ENCODE measurements at regions of chr1 and their contacts with region 1.

Region 1: DNA sequence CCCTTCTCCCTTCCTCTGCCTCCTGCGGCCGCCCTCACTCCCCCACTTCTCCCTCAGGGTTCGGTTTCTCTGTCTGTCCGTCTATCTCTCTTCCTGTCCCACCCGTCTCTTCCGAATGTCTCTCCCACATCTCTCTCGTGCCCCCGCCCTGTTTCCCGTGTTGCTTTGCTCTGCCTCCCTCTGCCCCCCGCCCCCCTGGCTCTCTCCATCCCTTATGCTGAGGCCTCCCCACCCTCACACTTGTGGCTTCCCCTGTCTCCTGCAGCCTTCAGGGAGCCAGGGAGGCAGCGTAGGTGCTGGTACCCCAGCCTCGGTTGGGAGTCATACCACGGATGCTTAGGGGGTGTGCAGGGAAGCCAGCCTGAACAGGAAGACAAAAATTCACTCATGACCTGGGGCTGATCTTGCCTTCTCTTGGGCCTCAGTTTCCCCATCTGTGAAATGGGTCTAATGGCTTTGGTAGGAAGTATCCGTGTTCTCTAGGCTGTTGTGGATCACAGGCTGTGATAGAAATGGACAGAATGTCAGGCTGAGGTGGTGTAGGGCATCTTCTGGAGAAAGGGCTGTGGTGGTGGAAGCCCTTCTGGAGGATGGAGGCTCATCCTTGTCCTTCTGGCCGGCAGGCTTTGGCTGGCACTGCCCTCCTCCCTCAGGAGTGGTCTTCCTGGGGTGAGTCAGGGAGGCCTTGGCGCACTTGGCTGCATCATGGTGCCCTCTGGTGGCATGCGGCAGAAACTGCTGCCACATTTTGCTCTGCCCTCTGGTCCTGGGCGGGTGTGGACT is 55.5 kb downstream of the FOXO6 start:
- DNase-seq: peak; percentile 71
- H3K4me3 ChIP-seq: no peak overlapping the region
- H3K27ac ChIP-seq: no peak overlapping the region
- H3K4me1 ChIP-seq: peaks cover 9% of the 10 kb centered on the region
- H3K27me3 ChIP-seq: no peaks in the 10 kb centered on the region
- CTCF ChIP-seq: peak; percentile 82 to 96
- POLR2A ChIP-seq: no peak

Region 2: DNA sequence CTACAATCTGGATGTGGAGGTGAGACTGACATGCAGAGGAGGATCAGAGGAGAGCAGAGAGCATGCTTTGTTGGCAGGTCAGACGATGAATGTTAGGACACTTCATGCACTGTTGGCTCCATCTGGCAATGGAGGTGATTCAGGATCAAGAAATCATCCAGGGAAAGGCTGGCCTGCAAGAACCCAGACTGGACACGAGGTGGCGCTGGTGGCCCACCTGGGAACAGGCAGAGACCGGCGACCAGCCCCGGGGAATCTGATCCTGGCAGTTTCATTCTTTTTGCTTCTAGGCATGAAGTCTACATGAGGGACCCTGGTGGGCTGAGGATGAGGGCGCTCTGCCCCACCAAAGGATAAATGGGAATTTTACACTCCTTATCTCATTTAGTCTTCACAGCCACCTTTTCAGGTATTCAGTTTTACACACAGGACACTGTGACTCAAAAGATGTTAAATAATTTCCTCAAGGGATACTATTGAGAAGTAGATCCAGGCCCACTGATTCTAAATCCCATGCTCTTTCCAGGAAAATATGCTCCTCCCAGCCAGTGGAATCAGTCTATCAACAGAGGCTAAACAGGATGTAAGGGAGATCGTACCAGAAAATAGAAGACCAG is 148.5 kb before region 1 on chr1:
- CTCF ChIA-PET with region 1: interaction called, 11 read pairs
- POLR2A ChIA-PET with region 1: no interaction called
- dilution Hi-C with region 1: no loop called
- intact Hi-C with region 1: loop called (anchors 1 kb)
- DNase-seq: peak; percentile 68
- H3K4me3 ChIP-seq: no peak overlapping the region
- H3K27ac ChIP-seq: no peak overlapping the region
- H3K4me1 ChIP-seq: no peaks in the 10 kb centered on the region
- H3K27me3 ChIP-seq: peaks cover 0 to 9% of the 10 kb centered on the region in 2 experiments
- CTCF ChIP-seq: peak; percentile 95 to 97
- POLR2A ChIP-seq: no peak

Region 3: DNA sequence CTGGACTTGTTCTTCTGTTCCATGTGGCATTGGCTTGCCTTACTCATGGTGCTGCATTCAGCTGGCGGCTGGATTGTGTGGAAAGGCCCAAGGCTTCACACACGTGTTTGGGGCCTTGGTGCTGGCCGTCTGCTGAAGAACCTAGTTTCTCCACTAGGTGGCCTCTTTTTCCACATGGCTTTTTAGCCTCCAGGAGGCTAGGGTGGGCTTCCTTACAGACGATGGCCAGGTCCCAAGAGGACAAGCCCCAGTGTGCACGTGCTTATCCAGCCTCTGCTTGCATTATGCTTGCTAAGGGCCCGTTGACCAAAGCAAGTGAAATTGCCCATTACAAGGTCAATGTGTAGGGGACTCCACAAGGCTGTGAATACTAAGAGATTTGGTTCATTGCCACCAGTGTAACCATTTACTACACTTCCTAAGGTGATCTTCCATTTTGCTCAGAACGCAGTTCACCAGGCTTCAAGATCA is 103.0 kb before region 1 on chr1:
- CTCF ChIA-PET with region 1: interaction called, 9 read pairs
- POLR2A ChIA-PET with region 1: no interaction called
- dilution Hi-C with region 1: no loop called
- intact Hi-C with region 1: loop called (anchors 1 kb)
- DNase-seq: peak; percentile 30
- H3K4me3 ChIP-seq: no peak overlapping the region
- H3K27ac ChIP-seq: no peak overlapping the region
- H3K4me1 ChIP-seq: no peaks in the 10 kb centered on the region
- H3K27me3 ChIP-seq: peaks cover 0 to 14% of the 10 kb centered on the region in 2 experiments
- CTCF ChIP-seq: peak; percentile 61 to 72
- POLR2A ChIP-seq: no peak

Region 4: GRCh38 chr1:41322835-41323627 is 93.7 kb before region 1 on chr1:
- CTCF ChIA-PET with region 1: interaction called, 54 read pairs
- POLR2A ChIA-PET with region 1: no interaction called
- dilution Hi-C with region 1: no loop called
- intact Hi-C with region 1: loop called (anchors 1 kb)
- DNase-seq: peak; percentile 24
- H3K4me3 ChIP-seq: no peak overlapping the region
- H3K27ac ChIP-seq: no peak overlapping the region
- H3K4me1 ChIP-seq: no peaks in the 10 kb centered on the region
- H3K27me3 ChIP-seq: no peaks in the 10 kb centered on the region
- CTCF ChIP-seq: peak; percentile 53 to 62
- POLR2A ChIP-seq: no peak

Region 5: DNA sequence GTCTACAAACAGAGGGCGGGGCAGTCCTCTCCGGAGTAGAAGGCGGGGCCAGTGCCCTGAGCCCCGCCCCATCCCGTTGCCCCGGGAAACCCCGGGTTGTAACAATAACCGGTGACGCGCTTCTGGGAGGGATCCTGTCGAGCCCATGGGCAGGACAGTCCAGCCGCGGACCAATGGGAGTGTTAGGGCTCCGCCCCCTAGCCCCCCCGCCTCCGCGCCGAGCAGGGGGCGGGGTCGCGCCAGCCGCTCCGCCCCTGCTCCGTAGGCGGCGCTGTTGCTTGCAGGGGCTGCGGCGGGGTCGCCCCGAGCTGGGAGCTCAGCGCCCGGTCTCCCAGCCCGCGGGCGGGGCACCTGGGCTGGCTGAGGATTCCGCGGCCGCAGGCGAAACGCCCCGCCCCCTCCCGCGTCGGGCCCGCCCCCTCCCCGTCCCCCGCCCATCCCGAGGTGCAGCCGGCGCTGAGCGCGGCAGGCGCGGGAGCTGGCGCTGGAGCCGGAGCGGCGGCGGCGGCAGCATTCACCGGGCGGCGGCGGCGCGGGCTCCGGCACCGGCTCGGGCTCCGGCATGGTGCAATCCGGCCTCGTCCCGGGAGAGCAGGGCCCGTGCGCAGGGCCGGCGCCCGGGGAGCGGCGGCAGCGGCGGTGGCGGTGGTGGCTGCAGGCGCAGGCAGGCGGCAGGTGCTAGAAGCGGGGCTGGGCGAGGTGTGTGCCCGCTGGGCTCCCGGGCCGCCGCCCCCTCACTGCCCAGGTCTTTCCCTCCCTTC is 55.6 kb before region 1 on chr1 and contains the start of gene FOXO6:
- CTCF ChIA-PET with region 1: interaction called, 9 read pairs
- POLR2A ChIA-PET with region 1: no interaction called
- dilution Hi-C with region 1: no loop called
- intact Hi-C with region 1: loop called (anchors 1 kb)
- DNase-seq: peak; percentile 96
- H3K4me3 ChIP-seq: peak within 1 kb of the TSS in 2 of 3 experiments; percentile 32 to 36
- H3K27ac ChIP-seq: no peak within 1 kb of the TSS
- H3K4me1 ChIP-seq: peaks cover 3% of the 10 kb centered on the region
- H3K27me3 ChIP-seq: peaks cover 14 to 22% of the 10 kb centered on the region in 2 experiments
- CTCF ChIP-seq: peak; percentile 47 to 59
- POLR2A ChIP-seq: no peak
- total RNA-seq, gene FOXO6: 0.18 and 0.38 TPM in 2 replicates

Region 6: DNA sequence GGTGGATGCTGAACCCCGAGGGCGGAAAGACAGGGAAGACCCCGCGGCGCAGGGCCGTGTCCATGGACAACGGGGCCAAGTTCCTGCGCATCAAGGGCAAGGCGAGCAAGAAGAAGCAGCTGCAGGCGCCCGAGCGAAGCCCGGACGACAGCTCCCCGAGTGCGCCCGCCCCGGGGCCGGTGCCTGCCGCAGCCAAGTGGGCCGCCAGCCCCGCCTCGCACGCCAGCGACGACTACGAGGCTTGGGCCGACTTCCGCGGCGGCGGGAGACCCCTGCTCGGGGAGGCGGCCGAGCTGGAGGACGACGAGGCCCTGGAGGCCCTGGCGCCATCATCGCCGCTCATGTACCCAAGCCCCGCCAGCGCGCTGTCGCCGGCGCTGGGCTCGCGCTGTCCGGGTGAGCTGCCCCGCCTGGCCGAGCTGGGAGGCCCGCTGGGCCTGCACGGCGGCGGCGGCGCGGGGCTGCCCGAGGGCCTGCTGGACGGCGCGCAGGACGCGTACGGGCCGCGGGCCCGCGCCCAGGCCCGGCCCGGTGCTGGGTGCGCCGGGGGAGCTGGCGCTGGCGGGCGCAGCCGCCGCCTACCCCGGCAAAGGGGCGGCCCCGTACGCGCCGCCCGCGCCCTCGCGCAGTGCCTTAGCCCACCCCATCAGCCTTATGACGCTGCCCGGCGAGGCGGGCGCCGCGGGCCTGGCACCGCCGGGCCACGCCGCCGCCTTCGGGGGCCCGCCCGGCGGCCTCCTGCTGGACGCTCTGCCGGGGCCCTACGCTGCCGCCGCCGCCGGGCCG is 34.9 kb before region 1 on chr1:
- CTCF ChIA-PET with region 1: interaction called, 4 read pairs
- POLR2A ChIA-PET with region 1: no interaction called
- dilution Hi-C with region 1: no loop called
- intact Hi-C with region 1: loop called (anchors 1 kb)
- DNase-seq: peak; percentile 17
- H3K4me3 ChIP-seq: peak overlapping the region; percentile 25 to 38 (median 35)
- H3K27ac ChIP-seq: peak overlapping the region; percentile 64
- H3K4me1 ChIP-seq: peaks cover 2% of the 10 kb centered on the region
- H3K27me3 ChIP-seq: peaks cover 6 to 17% of the 10 kb centered on the region in 2 experiments
- CTCF ChIP-seq: no peak
- POLR2A ChIP-seq: peak; percentile 37